Body of pancreas (tissue), 4 donors: ENCODE measurements at regions of chr3 and their contacts with region 1.

Region 1: GRCh38 chr3:183895296-183895695 is 10.6 kb upstream of the PARL start:
- DNase-seq: peak in 3 of 4 donors; percentile 51 to 57 (median 52)
- ATAC-seq: peak; percentile 89
- H3K4me3 ChIP-seq: no peak overlapping the region
- H3K27ac ChIP-seq: no peak overlapping the region
- H3K4me1 ChIP-seq: no peaks in the 10 kb centered on the region
- H3K27me3 ChIP-seq: no peaks in the 10 kb centered on the region
- CTCF ChIP-seq: peak; percentile 45 to 90 (median 76)
- POLR2A ChIP-seq: no peak

Region 2: GRCh38 chr3:183734750-183735494 is 160.4 kb before region 1 on chr3:
- intact Hi-C with region 1: no loop called
- DNase-seq: no peak
- ATAC-seq: no peak
- H3K4me3 ChIP-seq: no peak overlapping the region
- H3K27ac ChIP-seq: no peak overlapping the region
- H3K4me1 ChIP-seq: no peaks in the 10 kb centered on the region
- H3K27me3 ChIP-seq: no peaks in the 10 kb centered on the region
- CTCF ChIP-seq: no peak
- POLR2A ChIP-seq: no peak

Region 3: DNA sequence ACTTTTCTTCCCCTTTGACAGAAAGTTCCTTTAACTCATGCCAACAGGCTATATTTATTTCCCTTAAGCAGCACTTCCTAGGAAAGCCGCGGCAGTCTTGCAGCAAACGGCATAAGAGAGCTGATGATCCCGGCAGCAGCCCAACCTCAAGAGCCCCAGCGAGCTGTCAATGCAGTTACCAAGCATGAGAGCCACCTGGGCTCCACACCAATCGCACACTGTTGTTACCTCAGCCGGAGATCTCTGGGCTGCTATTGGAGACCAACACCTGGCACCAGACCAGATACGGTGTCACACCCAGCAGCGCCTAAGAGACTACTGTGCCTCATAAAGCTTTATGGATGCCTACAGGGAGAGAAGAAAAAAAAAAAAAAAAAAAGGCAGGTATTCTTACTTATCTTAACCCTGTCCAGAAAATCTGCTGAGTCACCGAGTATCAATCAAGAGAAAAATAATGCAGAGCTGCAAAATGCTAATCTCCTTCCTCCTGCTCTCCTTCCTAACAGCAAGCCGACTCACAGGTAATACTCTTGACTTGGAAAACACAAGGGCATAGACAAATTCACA is 110.7 kb after region 1 on chr3:
- intact Hi-C with region 1: no loop called
- DNase-seq: peak; percentile 76 to 87 (median 82)
- ATAC-seq: peak; percentile 95
- H3K4me3 ChIP-seq: no peak overlapping the region
- H3K27ac ChIP-seq: peak overlapping the region in 2 of 4 donors; percentile 38 to 62
- H3K4me1 ChIP-seq: peaks cover 8% of the 10 kb centered on the region
- H3K27me3 ChIP-seq: no peaks in the 10 kb centered on the region
- CTCF ChIP-seq: no peak
- POLR2A ChIP-seq: peak in 1 of 3 donors; percentile 27

Region 4: DNA sequence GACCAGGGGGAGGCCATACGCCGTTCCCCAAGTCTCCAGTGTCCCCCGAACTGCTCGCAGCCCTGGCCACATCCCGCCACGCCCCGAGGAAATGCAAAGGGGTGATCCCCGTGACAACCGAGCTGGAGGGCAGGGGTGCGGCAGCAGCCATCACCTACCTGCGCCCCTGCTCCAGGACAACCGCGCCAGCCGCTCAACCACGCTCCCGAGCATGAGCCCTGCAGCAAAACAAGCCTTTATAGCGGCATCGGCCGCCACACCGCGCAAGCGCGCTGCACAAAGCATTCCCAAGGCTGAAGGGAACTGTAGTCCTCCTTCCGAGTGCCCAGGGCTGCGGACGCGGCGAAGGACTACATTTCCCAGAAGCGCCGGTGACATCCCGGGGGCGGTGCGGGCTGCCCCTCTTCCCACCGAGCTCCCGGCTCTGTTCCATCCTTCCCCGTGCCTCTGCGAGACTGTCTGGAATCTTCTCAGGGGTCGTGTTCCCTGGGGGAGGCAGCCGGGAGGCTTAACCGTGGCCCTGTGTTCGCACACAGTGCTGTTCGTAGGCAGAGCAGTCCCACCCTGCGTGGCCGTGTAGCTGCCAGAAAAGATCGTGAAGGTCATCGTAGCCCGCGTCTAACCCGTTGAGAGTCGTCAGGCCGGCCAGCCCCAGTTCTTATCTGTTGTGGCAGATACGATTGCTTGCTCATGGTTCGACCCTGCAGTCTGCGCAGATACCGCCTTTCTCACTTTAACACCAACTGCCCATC is 122.6 kb after region 1 on chr3 and contains the start of gene ABCC5:
- intact Hi-C with region 1: loop called (anchors 5 kb)
- DNase-seq: peak; percentile 91 to 94 (median 94)
- ATAC-seq: peak; percentile 99
- H3K4me3 ChIP-seq: peak within 1 kb of the TSS; percentile 91 to 100
- H3K27ac ChIP-seq: peak within 1 kb of the TSS; percentile 20 to 79 (median 57)
- H3K4me1 ChIP-seq: peaks cover 7% of the 10 kb centered on the region
- H3K27me3 ChIP-seq: no peaks in the 10 kb centered on the region
- CTCF ChIP-seq: peak in 4 of 7 experiments; percentile 13 to 45 (median 33)
- POLR2A ChIP-seq: peak in 2 of 3 donors; percentile 61
- total RNA-seq, gene ABCC5: 17.1 to 20.1 TPM

Region 5: GRCh38 chr3:184543843-184544512 is 648.7 kb after region 1 on chr3:
- intact Hi-C with region 1: loop called (anchors 10 kb)
- DNase-seq: peak; percentile 88 to 91 (median 88)
- ATAC-seq: peak; percentile 83
- H3K4me3 ChIP-seq: no peak overlapping the region
- H3K27ac ChIP-seq: no peak overlapping the region
- H3K4me1 ChIP-seq: peaks cover 10% of the 10 kb centered on the region
- H3K27me3 ChIP-seq: peaks cover 0 to 7% of the 10 kb centered on the region in 2 donors
- CTCF ChIP-seq: peak; percentile 77 to 93 (median 91)
- POLR2A ChIP-seq: no peak